Activated B cell treated with CpG ODN at 0.5 μM for 24 hours (primary cell): ENCODE measurements at regions of chr12 and their contacts with region 1.

Region 1: DNA sequence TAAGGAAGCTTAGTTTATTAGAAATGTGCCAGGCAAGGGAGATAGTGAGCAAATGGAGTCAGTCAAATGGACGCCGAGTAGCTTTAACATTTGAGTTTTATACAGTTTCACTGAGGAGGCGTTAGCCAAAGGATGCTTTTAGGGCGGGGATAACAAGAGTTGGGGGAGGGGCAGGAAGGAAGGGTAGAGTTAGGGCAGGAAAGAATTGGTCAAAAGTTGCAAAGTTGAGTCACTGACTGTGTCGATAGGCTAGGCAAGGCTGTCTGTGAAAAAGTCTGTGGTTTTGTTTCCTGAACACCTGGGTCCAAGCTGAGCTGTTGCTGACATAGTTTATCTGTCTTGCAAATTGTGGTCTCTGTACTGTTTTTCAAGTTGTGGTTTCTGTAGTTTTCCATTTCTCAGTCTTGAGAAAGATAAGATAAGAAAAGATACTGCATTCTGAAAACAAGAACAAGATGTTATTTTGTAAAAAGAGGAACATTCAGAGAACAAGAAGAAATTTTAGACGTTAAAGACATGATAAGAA is 62.6 kb upstream of the RESF1 start:
- DNase-seq: peak; percentile 58
- ATAC-seq: peak; percentile 93
- H3K4me3 Mint-ChIP-seq: peak overlapping the region; percentile 73
- H3K27ac Mint-ChIP-seq: peak overlapping the region; percentile 96
- H3K4me1 Mint-ChIP-seq: peaks cover 69% of the 10 kb centered on the region
- H3K27me3 Mint-ChIP-seq: no peaks in the 10 kb centered on the region
- CTCF ChIP-seq: no peak

Region 2: GRCh38 chr12:31406345-31406744 is 490.2 kb before region 1 on chr12:
- CTCF ChIA-PET with region 1: no interaction called
- POLR2A ChIA-PET with region 1: interaction called, 15 read pairs
- intact Hi-C with region 1: loop called (anchors 10 kb)
- DNase-seq: no peak
- ATAC-seq: peak; percentile 39
- H3K4me3 Mint-ChIP-seq: peak overlapping the region; percentile 65
- H3K27ac Mint-ChIP-seq: peak overlapping the region; percentile 77
- H3K4me1 Mint-ChIP-seq: peaks cover 33% of the 10 kb centered on the region
- H3K27me3 Mint-ChIP-seq: no peaks in the 10 kb centered on the region
- CTCF ChIP-seq: no peak

Region 3: GRCh38 chr12:31804185-31804504 is 92.4 kb before region 1 on chr12:
- CTCF ChIA-PET with region 1: no interaction called
- POLR2A ChIA-PET with region 1: interaction called, 41 read pairs
- intact Hi-C with region 1: loop called (anchors 1 kb)
- DNase-seq: no peak
- ATAC-seq: no peak
- H3K4me3 Mint-ChIP-seq: peak overlapping the region; percentile 78
- H3K27ac Mint-ChIP-seq: peak overlapping the region; percentile 88
- H3K4me1 Mint-ChIP-seq: peaks cover 50% of the 10 kb centered on the region
- H3K27me3 Mint-ChIP-seq: no peaks in the 10 kb centered on the region
- CTCF ChIP-seq: no peak

Region 4: GRCh38 chr12:31832740-31833729 is 63.5 kb before region 1 on chr12:
- CTCF ChIA-PET with region 1: no interaction called
- POLR2A ChIA-PET with region 1: interaction called, 56 read pairs
- intact Hi-C with region 1: loop called (anchors 1 kb)
- DNase-seq: peak; percentile 36
- ATAC-seq: peak; percentile 84
- H3K4me3 Mint-ChIP-seq: peak overlapping the region; percentile 59
- H3K27ac Mint-ChIP-seq: peak overlapping the region; percentile 94
- H3K4me1 Mint-ChIP-seq: peaks cover 76% of the 10 kb centered on the region
- H3K27me3 Mint-ChIP-seq: no peaks in the 10 kb centered on the region
- CTCF ChIP-seq: no peak

Region 5: DNA sequence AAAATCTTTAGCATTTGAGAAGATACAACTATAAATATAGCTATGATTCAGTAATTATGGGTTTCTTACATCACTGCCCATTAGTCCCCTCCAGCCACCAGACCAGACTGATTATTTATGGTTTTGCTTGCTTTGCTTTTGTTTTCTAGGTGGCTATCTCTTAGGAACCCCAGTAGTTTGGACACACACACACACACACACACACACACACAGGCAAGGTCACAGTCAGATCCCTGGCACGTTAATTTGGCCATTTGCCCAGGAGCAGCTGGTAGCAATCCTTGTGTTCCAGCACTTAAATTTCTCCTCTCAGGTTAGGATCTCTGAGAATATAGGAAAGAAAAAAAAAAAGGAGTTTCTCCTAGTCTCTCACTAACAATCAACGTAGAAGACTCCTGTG is 27.6 kb before region 1 on chr12:
- CTCF ChIA-PET with region 1: no interaction called
- POLR2A ChIA-PET with region 1: interaction called, 45 read pairs
- intact Hi-C with region 1: no loop called
- DNase-seq: no peak
- ATAC-seq: no peak
- H3K4me3 Mint-ChIP-seq: no peak overlapping the region
- H3K27ac Mint-ChIP-seq: peak overlapping the region; percentile 75
- H3K4me1 Mint-ChIP-seq: peaks cover 58% of the 10 kb centered on the region
- H3K27me3 Mint-ChIP-seq: no peaks in the 10 kb centered on the region
- CTCF ChIP-seq: no peak

Region 6: DNA sequence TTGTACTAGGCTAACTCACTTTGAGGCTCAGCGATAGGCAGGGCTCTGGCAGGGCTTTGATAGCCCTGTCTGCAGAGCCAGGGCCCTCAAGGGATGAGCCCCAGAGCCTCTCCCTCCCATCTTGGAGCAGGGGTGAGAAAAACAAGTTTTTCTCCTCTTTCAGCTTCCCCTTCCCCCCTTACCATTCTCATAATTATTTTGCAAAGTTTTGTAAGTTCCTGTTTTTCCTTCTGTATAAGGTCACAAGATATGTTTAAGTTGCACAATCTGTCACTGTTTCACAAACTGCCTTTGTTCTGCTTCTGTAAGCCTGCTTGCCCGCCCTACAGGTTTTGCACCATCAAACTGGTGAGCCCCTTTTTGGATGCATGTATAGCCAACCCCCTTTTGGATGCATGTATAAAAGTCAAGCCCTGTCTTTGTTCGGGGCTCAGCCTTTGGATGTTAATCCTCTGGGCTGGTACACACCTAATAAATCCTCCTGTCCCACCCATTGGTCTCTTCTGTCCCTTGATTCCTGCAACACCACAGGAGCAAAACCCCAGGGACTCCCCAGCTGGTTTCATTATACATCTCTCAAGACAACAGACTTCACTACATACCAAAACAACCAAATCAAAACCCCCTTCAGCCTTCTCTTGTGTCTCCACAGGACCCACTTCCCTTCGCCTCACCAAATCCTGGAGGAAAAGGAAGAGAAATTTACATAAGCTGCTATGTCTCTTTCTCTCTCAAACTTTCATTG is 10.2 kb after region 1 on chr12:
- CTCF ChIA-PET with region 1: no interaction called
- POLR2A ChIA-PET with region 1: interaction called, 20 read pairs
- intact Hi-C with region 1: loop called (anchors 1 kb)
- DNase-seq: no peak
- ATAC-seq: peak; percentile 80
- H3K4me3 Mint-ChIP-seq: peak overlapping the region; percentile 55
- H3K27ac Mint-ChIP-seq: peak overlapping the region; percentile 87
- H3K4me1 Mint-ChIP-seq: peaks cover 33% of the 10 kb centered on the region
- H3K27me3 Mint-ChIP-seq: no peaks in the 10 kb centered on the region
- CTCF ChIP-seq: no peak

Region 7: GRCh38 chr12:31951008-31951407 is 54.4 kb after region 1 on chr12:
- CTCF ChIA-PET with region 1: no interaction called
- POLR2A ChIA-PET with region 1: interaction called, 12 read pairs
- intact Hi-C with region 1: loop called (anchors 2 kb)
- DNase-seq: no peak
- ATAC-seq: peak; percentile 83
- H3K4me3 Mint-ChIP-seq: peak overlapping the region; percentile 17
- H3K27ac Mint-ChIP-seq: peak overlapping the region; percentile 68
- H3K4me1 Mint-ChIP-seq: peaks cover 53% of the 10 kb centered on the region
- H3K27me3 Mint-ChIP-seq: no peaks in the 10 kb centered on the region
- CTCF ChIP-seq: no peak

Region 8: GRCh38 chr12:32106517-32107358 is 210.2 kb after region 1 on chr12 and contains the start of gene BICD1:
- CTCF ChIA-PET with region 1: no interaction called
- POLR2A ChIA-PET with region 1: no interaction called
- intact Hi-C with region 1: no loop called
- DNase-seq: peak; percentile 69
- ATAC-seq: peak; percentile 78
- H3K4me3 Mint-ChIP-seq: peak within 1 kb of the TSS; percentile 95
- H3K27ac Mint-ChIP-seq: peak within 1 kb of the TSS; percentile 95
- H3K4me1 Mint-ChIP-seq: peaks cover 28% of the 10 kb centered on the region
- H3K27me3 Mint-ChIP-seq: no peaks in the 10 kb centered on the region
- CTCF ChIP-seq: no peak
- total RNA-seq, gene BICD1: 55.5 and 67.6 TPM in 2 replicates